ENCODE measurements at regions of chr1 and their contacts with region 1.

Region 1: GRCh38 chr1:155250633-155251449 is 4.4 kb downstream of the ENTREP3 start:
- H3K4me3 ChIP-seq: no peak overlapping the region
- H3K27ac ChIP-seq: peak overlapping the region; percentile 8
- H3K4me1 ChIP-seq: no peaks in the 10 kb centered on the region
- CTCF ChIP-seq: peak; percentile 99

Region 2: GRCh38 chr1:155117617-155118016 is 133.2 kb before region 1 on chr1:
- CTCF ChIA-PET with region 1: no interaction called
- POLR2A ChIA-PET with region 1: no interaction called
- H3K4me3 ChIP-seq: no peak overlapping the region
- H3K27ac ChIP-seq: no peak overlapping the region
- H3K4me1 ChIP-seq: no peaks in the 10 kb centered on the region
- CTCF ChIP-seq: no peak

Region 3: GRCh38 chr1:155139895-155140631 is 110.8 kb before region 1 on chr1 and contains the start of gene DPM3:
- CTCF ChIA-PET with region 1: no interaction called
- POLR2A ChIA-PET with region 1: no interaction called
- H3K4me3 ChIP-seq: peak within 1 kb of the TSS; percentile 79
- H3K27ac ChIP-seq: peak within 1 kb of the TSS; percentile 60
- H3K4me1 ChIP-seq: no peaks in the 10 kb centered on the region
- CTCF ChIP-seq: no peak

Region 4: DNA sequence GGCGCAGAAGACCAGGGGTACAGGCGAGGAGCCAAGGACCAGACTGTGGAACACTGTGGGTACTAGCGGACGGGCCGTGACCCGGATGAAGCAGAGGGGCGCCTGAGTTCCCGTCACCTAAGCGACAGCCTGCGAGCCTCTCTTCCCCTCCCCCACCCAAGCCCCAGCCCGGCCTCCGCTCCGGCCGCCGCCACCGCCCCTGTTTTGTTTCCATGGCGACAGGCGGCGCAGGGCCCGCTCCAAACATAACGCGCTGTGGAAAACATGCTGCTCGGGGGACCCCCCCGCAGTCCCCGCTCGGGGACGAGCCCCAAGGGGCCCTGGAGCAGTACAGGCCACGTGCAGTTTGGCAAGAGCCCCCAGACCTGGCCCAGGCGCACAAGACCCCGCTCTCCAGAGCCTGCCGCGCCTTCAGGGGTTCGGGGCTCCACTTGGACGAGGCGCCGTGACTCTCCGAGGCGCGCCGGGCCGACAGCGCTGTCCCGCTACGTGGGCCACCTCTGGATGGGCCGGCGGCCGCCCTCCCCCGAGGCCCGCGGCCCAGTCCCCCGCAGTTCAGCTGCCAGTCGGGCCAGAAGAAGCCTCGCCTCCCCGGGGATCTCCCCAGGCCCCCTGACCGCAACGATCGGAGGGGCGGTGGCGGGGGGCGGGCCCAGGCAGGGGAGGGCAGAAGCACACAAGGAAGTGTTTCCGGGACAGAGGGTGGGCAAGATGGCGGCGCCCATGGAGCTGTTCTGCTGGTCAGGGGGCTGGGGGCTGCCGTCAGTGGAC is 42.1 kb before region 1 on chr1 and contains the start of gene MTX1:
- CTCF ChIA-PET with region 1: interaction called, 27 read pairs
- POLR2A ChIA-PET with region 1: no interaction called
- H3K4me3 ChIP-seq: peak within 1 kb of the TSS; percentile 98
- H3K27ac ChIP-seq: peak within 1 kb of the TSS; percentile 86; the same call in 1 of the 2 replicates
- H3K4me1 ChIP-seq: peaks cover 4% of the 10 kb centered on the region
- CTCF ChIP-seq: 0 out of 2 replicates have a peak, but pooled peaks have one; percentile 4

Region 5: GRCh38 chr1:155261852-155262673 is 11.2 kb after region 1 on chr1 and contains the start of gene SCAMP3:
- CTCF ChIA-PET with region 1: interaction called, 91 read pairs
- POLR2A ChIA-PET with region 1: interaction called, 25 read pairs
- H3K4me3 ChIP-seq: peak within 1 kb of the TSS; percentile 91
- H3K27ac ChIP-seq: peak within 1 kb of the TSS; percentile 61
- H3K4me1 ChIP-seq: no peaks in the 10 kb centered on the region
- CTCF ChIP-seq: no peak

Region 6: GRCh38 chr1:155277070-155277895 is 26.4 kb after region 1 on chr1 and contains the start of gene HCN3:
- CTCF ChIA-PET with region 1: interaction called, 45 read pairs
- POLR2A ChIA-PET with region 1: interaction called, 28 read pairs
- H3K4me3 ChIP-seq: peak within 1 kb of the TSS; percentile 75
- H3K27ac ChIP-seq: peak within 1 kb of the TSS; percentile 58; the same call in 1 of the 2 replicates
- H3K4me1 ChIP-seq: no peaks in the 10 kb centered on the region
- CTCF ChIP-seq: peak; percentile 36; the same call in 1 of the 2 replicates

Region 7: DNA sequence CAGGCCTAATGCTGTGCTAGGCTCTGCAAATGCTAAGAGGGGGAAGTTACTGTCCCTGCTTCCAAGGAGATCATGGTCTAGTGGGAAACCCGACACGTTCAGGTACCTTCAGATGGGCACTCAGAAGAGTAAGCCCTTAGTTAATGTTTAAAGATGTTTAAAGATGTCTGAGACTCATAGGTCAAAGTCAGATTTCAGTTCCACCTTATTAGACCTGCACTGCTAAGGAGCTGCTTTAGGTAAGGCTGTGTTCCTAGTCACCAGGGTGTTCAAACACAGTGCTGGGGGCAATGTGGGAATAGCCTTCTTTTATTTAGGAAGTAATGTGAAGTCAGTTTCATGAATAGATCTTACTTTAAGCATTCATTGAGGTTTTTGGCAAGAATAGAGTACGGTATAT is 66.1 kb after region 1 on chr1:
- CTCF ChIA-PET with region 1: interaction called, 77 read pairs
- POLR2A ChIA-PET with region 1: interaction called, 3 read pairs
- H3K4me3 ChIP-seq: no peak overlapping the region
- H3K27ac ChIP-seq: no peak overlapping the region
- H3K4me1 ChIP-seq: no peaks in the 10 kb centered on the region
- CTCF ChIP-seq: no peak

Region 8: GRCh38 chr1:155392898-155393411 is 142.1 kb after region 1 on chr1:
- CTCF ChIA-PET with region 1: no interaction called
- POLR2A ChIA-PET with region 1: no interaction called
- H3K4me3 ChIP-seq: no peak overlapping the region
- H3K27ac ChIP-seq: peak overlapping the region; percentile 41; the same call in 1 of the 2 replicates
- H3K4me1 ChIP-seq: no peaks in the 10 kb centered on the region
- CTCF ChIP-seq: no peak

Region 9: DNA sequence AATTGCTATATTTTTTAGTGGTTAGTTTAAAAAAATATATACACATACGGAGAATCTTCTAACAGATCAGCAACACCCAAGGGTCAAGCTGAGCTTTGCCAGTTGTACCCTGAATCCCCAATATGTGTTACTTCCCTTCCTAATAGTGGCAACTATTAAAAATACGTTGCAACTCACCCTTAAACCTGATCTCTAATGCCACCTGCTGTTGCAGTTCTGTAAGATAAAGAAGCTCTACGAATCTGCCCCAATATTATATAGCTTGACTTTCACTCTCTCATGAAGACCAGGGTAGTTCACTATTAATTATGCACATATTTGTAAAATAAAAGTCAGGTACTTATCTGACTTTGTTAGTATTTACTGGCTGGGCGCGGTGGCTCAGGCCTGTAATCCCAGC is 253.4 kb after region 1 on chr1:
- CTCF ChIA-PET with region 1: interaction called, 20 read pairs
- POLR2A ChIA-PET with region 1: no interaction called
- H3K4me3 ChIP-seq: no peak overlapping the region
- H3K27ac ChIP-seq: no peak overlapping the region
- H3K4me1 ChIP-seq: peaks cover 6% of the 10 kb centered on the region
- CTCF ChIP-seq: 0 out of 2 replicates have a peak, but pooled peaks have one; percentile 25

Measured in HEK293 (cell line).